Activated CD4-positive, alpha-beta memory T cell treated with anti-CD3 and anti-CD28 coated beads for 36 hours (primary cell): ENCODE measurements at regions of chr7 and their contacts with region 1.

Region 1: GRCh38 chr7:44638611-44639557 is 32.5 kb downstream of the OGDH start:
- DNase-seq: peak; percentile 93
- H3K4me3 Mint-ChIP-seq: peak overlapping the region; percentile 67
- H3K27ac Mint-ChIP-seq: peak overlapping the region; percentile 100
- H3K4me1 Mint-ChIP-seq: peaks cover 80% of the 10 kb centered on the region
- H3K27me3 Mint-ChIP-seq: no peaks in the 10 kb centered on the region

Region 2: DNA sequence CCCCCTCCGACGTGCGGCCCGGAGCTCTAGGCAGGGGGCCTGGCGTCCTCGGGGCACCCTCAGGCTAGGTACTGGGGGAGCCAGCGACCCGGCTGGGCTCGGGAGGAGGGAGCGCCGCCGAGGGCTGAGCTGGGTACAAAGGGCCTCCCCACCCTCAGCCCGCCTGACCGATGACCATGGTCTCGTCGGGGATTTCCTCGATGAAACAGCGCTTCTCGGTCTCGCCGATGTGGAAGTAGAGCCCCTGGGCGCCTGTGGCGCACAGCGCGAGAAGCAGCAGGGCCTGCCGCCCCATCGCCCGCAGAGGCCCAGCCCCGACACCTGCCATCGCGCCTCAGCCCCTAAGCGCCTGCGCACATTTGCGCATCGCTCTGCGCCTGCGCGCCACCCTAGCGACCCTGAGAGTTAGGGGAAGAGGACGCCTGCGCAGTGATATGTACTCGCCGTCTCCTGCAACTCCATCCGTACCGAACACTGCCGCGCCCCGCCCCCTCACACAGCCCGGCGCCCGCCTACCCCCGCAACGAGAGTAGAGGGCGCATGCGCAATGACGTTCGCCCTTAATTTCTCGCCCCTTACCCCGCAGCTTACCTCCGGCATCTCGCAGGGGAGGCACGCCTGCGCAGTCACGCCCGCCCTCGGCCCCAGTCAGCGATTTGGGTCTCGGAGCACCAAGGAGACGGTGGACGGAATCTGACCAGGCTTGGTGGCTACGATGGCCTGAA is 56.8 kb before region 1 on chr7 and contains the start of gene TMED4:
- CTCF ChIA-PET with region 1: no interaction called
- POLR2A ChIA-PET with region 1: interaction called, 7 read pairs
- intact Hi-C with region 1: loop called (anchors 1 kb)
- DNase-seq: peak; percentile 100
- H3K4me3 Mint-ChIP-seq: peak within 1 kb of the TSS; percentile 91
- H3K27ac Mint-ChIP-seq: peak within 1 kb of the TSS; percentile 91
- H3K4me1 Mint-ChIP-seq: peaks cover 29% of the 10 kb centered on the region
- H3K27me3 Mint-ChIP-seq: peaks cover 3% of the 10 kb centered on the region
- total RNA-seq, gene TMED4: 74.8 to 79.1 TPM

Region 3: GRCh38 chr7:44606450-44607254 is 32.2 kb before region 1 on chr7 and contains the start of gene OGDH:
- CTCF ChIA-PET with region 1: interaction called, 10 read pairs
- POLR2A ChIA-PET with region 1: interaction called, 60 read pairs
- intact Hi-C with region 1: loop called (anchors 1 kb)
- DNase-seq: peak; percentile 100
- H3K4me3 Mint-ChIP-seq: peak within 1 kb of the TSS; percentile 82
- H3K27ac Mint-ChIP-seq: peak within 1 kb of the TSS; percentile 98
- H3K4me1 Mint-ChIP-seq: peaks cover 36% of the 10 kb centered on the region
- H3K27me3 Mint-ChIP-seq: no peaks in the 10 kb centered on the region
- total RNA-seq, gene OGDH: 103 to 105 TPM

Region 4: GRCh38 chr7:44622307-44623151 is 16.4 kb before region 1 on chr7:
- CTCF ChIA-PET with region 1: interaction called, 11 read pairs
- POLR2A ChIA-PET with region 1: interaction called, 34 read pairs
- intact Hi-C with region 1: loop called (anchors 1 kb)
- DNase-seq: peak; percentile 74
- H3K4me3 Mint-ChIP-seq: peak overlapping the region; percentile 69
- H3K27ac Mint-ChIP-seq: peak overlapping the region; percentile 93
- H3K4me1 Mint-ChIP-seq: peaks cover 92% of the 10 kb centered on the region
- H3K27me3 Mint-ChIP-seq: no peaks in the 10 kb centered on the region

Region 5: DNA sequence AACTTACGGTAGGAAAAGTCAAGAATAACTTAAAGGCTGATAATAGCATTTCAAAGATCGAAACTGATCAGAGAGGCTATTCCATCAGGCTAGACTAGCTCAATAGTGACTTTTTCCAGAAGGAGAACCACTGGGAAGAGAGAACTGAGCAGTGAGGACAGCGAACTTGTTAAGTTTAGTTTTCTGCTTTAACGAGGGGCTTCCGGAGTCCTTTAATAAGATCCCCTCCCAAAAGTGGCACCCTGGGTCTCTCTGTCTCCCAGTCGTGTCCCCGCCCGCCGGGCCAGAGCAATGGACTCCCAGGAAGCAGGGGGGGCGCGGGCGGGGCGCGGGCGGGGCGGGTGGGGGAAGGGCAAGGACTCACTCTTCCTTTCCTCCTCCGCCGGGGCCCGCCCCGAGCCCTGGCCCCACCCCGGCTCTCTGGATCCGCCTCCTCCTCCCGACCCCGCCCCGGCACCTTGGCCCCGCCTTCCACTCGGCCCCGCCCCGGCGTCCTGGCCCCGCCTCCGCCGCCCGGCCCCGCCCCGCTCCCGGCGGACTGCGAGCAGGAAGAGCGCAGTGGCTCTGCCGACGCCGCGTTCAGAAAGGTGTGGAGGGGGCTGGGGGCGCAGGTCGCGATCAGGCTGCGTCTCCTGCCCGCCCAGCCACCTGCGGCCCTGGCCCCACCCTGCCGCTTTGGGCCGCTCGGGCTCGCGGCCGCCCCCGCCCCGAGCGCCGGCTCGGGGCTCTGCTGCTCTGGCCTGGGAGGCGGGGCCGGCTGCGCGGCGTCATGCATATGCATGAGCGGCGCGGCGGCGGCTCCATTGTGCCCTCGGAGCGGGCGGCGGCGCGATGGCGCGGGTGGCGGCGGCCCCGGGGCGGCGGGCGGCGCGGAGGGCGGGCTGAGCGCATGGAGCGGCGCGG is 109.4 kb after region 1 on chr7 and contains the start of gene ZMIZ2:
- CTCF ChIA-PET with region 1: no interaction called
- POLR2A ChIA-PET with region 1: interaction called, 10 read pairs
- intact Hi-C with region 1: loop called (anchors 1 kb)
- DNase-seq: peak; percentile 93
- H3K4me3 Mint-ChIP-seq: peak within 1 kb of the TSS; percentile 81
- H3K27ac Mint-ChIP-seq: peak within 1 kb of the TSS; percentile 87
- H3K4me1 Mint-ChIP-seq: peaks cover 39% of the 10 kb centered on the region
- H3K27me3 Mint-ChIP-seq: no peaks in the 10 kb centered on the region
- total RNA-seq, gene ZMIZ2: 84.7 to 92.3 TPM

Region 6: DNA sequence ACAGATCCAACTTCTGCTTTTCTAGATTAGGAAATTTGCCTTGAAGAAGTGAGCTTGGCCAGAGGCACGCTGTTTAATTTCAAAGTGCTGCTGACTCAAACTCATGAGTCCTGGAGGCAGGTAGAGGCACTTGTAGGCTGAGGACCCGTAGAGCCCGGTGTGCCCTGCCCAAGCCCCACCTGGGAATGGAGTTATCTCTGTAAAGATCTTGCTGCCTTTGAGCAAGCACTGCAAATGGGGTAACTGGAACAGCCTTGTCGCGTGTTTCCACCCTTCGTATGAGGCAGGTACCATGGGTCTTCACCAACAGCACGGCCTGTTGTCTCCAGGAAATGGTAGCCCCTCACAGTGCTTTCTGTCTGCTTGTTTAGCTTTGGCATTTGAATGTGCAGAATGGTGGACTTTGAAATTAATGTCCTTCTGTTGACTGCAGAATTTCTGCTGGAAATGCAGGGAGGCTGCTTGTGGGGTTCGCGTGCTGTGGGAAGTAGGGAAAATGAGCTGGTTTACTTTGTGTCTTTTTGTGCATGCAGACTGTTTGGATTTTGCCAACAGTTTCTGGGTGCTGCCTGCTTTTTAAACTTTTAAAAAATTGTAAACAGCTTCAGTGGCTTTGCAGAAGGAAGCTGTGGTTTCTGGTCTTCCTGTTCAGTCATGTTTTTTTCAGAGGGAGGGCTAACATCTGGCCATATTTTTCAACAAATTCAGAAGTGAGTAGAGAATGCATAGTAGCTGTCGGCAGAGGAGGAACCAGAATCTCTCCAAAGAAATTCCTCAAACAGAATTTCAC is 388.3 kb after region 1 on chr7:
- CTCF ChIA-PET with region 1: no interaction called
- POLR2A ChIA-PET with region 1: no interaction called
- intact Hi-C with region 1: loop called (anchors 10 kb)
- DNase-seq: peak; percentile 30
- H3K4me3 Mint-ChIP-seq: peak overlapping the region; percentile 72
- H3K27ac Mint-ChIP-seq: peak overlapping the region; percentile 82
- H3K4me1 Mint-ChIP-seq: peaks cover 80% of the 10 kb centered on the region
- H3K27me3 Mint-ChIP-seq: no peaks in the 10 kb centered on the region